Naive thymus-derived CD4-positive, alpha-beta T cell (primary cell): ENCODE measurements at regions of chr19 and their contacts with region 1.

Region 1: GRCh38 chr19:4182084-4182810 is at the starts of genes ANKRD24 and SIRT6:
- DNase-seq: peak; percentile 91 to 97 (median 96)
- ATAC-seq: peak; percentile 90
- H3K4me3 ChIP-seq: peak within 1 kb of the TSS; percentile 90
- H3K4me3 Mint-ChIP-seq: peak within 1 kb of the TSS; percentile 92 to 99 (median 96)
- H3K27ac ChIP-seq: peak within 1 kb of the TSS; percentile 86
- H3K27ac Mint-ChIP-seq: peak within 1 kb of the TSS; percentile 92 to 98 (median 95)
- H3K4me1 ChIP-seq: peaks cover 14 to 15% of the 10 kb centered on the region in 2 donors
- H3K4me1 Mint-ChIP-seq: peaks cover 25 to 44% (median 39%) of the 10 kb centered on the region in 7 donors
- H3K27me3 ChIP-seq: no peaks in the 10 kb centered on the region
- H3K27me3 Mint-ChIP-seq: peaks cover 0 to 2% (median 0%) of the 10 kb centered on the region in 5 donors
- total RNA-seq, gene ANKRD24: 0.75 to 2.8 (median 2.4) TPM
- total RNA-seq, gene SIRT6: 20.0 to 41.2 (median 26.0) TPM

Region 2: GRCh38 chr19:4123615-4124568 is 58.4 kb before region 1 on chr19 and contains the start of gene MAP2K2:
- CTCF ChIA-PET with region 1: no interaction called
- POLR2A ChIA-PET with region 1: no interaction called
- intact Hi-C with region 1: loop called (anchors 1 kb)
- DNase-seq: peak; percentile 91 to 99 (median 96)
- ATAC-seq: peak; percentile 96
- H3K4me3 ChIP-seq: peak within 1 kb of the TSS; percentile 77
- H3K4me3 Mint-ChIP-seq: peak within 1 kb of the TSS; percentile 89 to 100 (median 94)
- H3K27ac ChIP-seq: peak within 1 kb of the TSS; percentile 80
- H3K27ac Mint-ChIP-seq: peak within 1 kb of the TSS; percentile 89 to 97 (median 93)
- H3K4me1 ChIP-seq: peaks cover 10 to 11% of the 10 kb centered on the region in 2 donors
- H3K4me1 Mint-ChIP-seq: peaks cover 17 to 31% (median 25%) of the 10 kb centered on the region in 7 donors
- H3K27me3 ChIP-seq: no peaks in the 10 kb centered on the region
- H3K27me3 Mint-ChIP-seq: no peaks in the 10 kb centered on the region
- total RNA-seq, gene MAP2K2: 87.4 to 162 (median 123) TPM